Caco-2 (cell line): ENCODE measurements at regions of chr11 and their contacts with region 1.

Region 1: DNA sequence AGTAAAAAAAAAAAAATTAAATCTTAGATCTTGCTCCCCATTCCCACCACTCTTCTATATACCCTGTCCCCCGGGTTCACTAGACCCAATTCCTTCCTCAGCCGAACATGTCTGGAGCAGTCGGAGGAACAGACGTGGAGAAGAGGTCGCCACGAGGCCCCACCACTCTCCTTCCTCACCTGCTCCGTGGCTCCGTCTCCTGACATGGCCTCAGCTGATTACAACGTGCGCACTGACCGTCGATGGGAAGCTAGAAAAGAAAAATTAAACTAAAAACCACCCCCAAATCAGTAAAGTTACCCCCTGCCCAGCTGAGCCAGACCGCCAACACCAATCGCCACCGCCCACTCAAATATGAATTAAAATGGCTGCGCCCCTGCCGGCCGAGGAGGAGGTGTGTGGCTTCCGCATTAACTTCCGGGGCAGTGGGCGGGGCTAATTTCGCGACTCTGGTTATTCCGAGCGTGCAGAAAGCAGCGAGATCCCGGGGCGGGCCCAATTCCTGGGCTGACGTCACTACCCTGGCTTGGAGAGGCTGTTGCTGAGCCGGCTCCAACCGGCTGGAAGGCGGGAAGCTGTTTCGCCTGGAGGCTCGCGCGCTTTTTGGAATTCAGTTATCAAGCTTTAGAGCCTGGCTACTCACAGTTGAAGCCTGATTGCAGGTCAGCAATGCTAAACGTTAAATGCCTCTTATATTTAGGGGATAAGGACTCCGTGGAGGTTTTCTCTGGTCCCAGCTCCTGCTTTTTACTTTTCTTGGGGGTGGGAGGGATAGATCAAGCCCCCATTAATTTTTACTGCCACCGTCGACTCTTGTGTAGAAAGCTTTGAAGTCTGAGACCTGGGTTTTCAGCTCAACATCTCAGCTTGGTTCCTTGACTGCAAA is at the start of gene CSTF3:
- DNase-seq: peak; percentile 100
- H3K4me3 ChIP-seq: peak within 1 kb of the TSS; percentile 79
- H3K4me3 Mint-ChIP-seq: peak within 1 kb of the TSS; percentile 100
- H3K27ac Mint-ChIP-seq: peak within 1 kb of the TSS; percentile 100
- H3K4me1 ChIP-seq: peaks cover 22% of the 10 kb centered on the region
- H3K4me1 Mint-ChIP-seq: peaks cover 11% of the 10 kb centered on the region
- H3K27me3 ChIP-seq: no peaks in the 10 kb centered on the region
- H3K27me3 Mint-ChIP-seq: no peaks in the 10 kb centered on the region
- CTCF ChIP-seq: peak; percentile 46 to 49
- total RNA-seq, gene CSTF3: 43.6 and 45.6 TPM in 2 replicates

Region 2: GRCh38 chr11:33039274-33040032 is 121.9 kb before region 1 on chr11 and contains the start of gene TCP11L1:
- CTCF ChIA-PET with region 1: no interaction called
- POLR2A ChIA-PET with region 1: no interaction called
- intact Hi-C with region 1: no loop called
- DNase-seq: peak; percentile 93 to 94
- H3K4me3 ChIP-seq: peak within 1 kb of the TSS; percentile 80
- H3K4me3 Mint-ChIP-seq: peak within 1 kb of the TSS; percentile 80
- H3K27ac Mint-ChIP-seq: peak within 1 kb of the TSS; percentile 96
- H3K4me1 ChIP-seq: peaks cover 24% of the 10 kb centered on the region
- H3K4me1 Mint-ChIP-seq: peaks cover 19% of the 10 kb centered on the region
- H3K27me3 ChIP-seq: no peaks in the 10 kb centered on the region
- H3K27me3 Mint-ChIP-seq: no peaks in the 10 kb centered on the region
- CTCF ChIP-seq: no peak
- total RNA-seq, gene TCP11L1: 22.8 and 25.0 TPM in 2 replicates

Region 3: DNA sequence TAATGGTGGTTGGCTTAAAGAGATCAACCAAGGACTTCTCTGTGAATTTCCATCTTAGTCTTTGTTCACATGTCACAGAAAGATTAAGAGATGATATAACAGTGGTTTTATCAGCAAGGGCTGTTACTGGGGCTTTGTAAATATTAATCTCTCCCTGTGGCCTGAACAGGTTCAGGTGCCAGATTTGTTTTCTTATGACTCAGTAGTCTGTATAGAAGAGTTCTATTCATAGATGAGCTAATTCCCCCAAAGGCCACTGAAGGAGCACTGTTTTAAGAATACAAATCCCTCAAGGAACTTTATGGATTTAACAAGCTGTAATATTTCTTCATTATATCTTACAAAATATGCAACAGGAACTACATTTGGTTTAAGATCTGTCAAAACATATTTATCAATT is 71.6 kb before region 1 on chr11:
- CTCF ChIA-PET with region 1: no interaction called
- POLR2A ChIA-PET with region 1: interaction called, 3 read pairs
- intact Hi-C with region 1: loop called (anchors 2 kb)
- DNase-seq: no peak
- H3K4me3 ChIP-seq: no peak overlapping the region
- H3K4me3 Mint-ChIP-seq: no peak overlapping the region
- H3K27ac Mint-ChIP-seq: no peak overlapping the region
- H3K4me1 ChIP-seq: peaks cover 20% of the 10 kb centered on the region
- H3K4me1 Mint-ChIP-seq: peaks cover 22% of the 10 kb centered on the region
- H3K27me3 ChIP-seq: no peaks in the 10 kb centered on the region
- H3K27me3 Mint-ChIP-seq: no peaks in the 10 kb centered on the region
- CTCF ChIP-seq: peak; percentile 18 to 24

Region 4: GRCh38 chr11:33195462-33196173 is 34.3 kb after region 1 on chr11:
- CTCF ChIA-PET with region 1: interaction called, 4 read pairs
- POLR2A ChIA-PET with region 1: no interaction called
- intact Hi-C with region 1: loop called (anchors 1 kb)
- DNase-seq: no peak
- H3K4me3 ChIP-seq: no peak overlapping the region
- H3K4me3 Mint-ChIP-seq: no peak overlapping the region
- H3K27ac Mint-ChIP-seq: no peak overlapping the region
- H3K4me1 ChIP-seq: peaks cover 15% of the 10 kb centered on the region
- H3K4me1 Mint-ChIP-seq: peaks cover 19% of the 10 kb centered on the region
- H3K27me3 ChIP-seq: no peaks in the 10 kb centered on the region
- H3K27me3 Mint-ChIP-seq: no peaks in the 10 kb centered on the region
- CTCF ChIP-seq: no peak

Region 5: GRCh38 chr11:33257897-33258630 is 96.7 kb after region 1 on chr11:
- CTCF ChIA-PET with region 1: no interaction called
- POLR2A ChIA-PET with region 1: interaction called, 3 read pairs
- intact Hi-C with region 1: loop called (anchors 2 kb)
- DNase-seq: peak; percentile 86
- H3K4me3 ChIP-seq: peak overlapping the region; percentile 90
- H3K4me3 Mint-ChIP-seq: peak overlapping the region; percentile 96
- H3K27ac Mint-ChIP-seq: peak overlapping the region; percentile 97
- H3K4me1 ChIP-seq: peaks cover 14% of the 10 kb centered on the region
- H3K4me1 Mint-ChIP-seq: peaks cover 20% of the 10 kb centered on the region
- H3K27me3 ChIP-seq: no peaks in the 10 kb centered on the region
- H3K27me3 Mint-ChIP-seq: no peaks in the 10 kb centered on the region
- CTCF ChIP-seq: peak in 1 of 2 experiments; percentile 39

Region 6: GRCh38 chr11:33329705-33330329 is 168.5 kb after region 1 on chr11:
- CTCF ChIA-PET with region 1: interaction called, 7 read pairs
- POLR2A ChIA-PET with region 1: interaction called, 3 read pairs
- intact Hi-C with region 1: loop called (anchors 1 kb)
- DNase-seq: peak; percentile 51 to 71
- H3K4me3 ChIP-seq: no peak overlapping the region
- H3K4me3 Mint-ChIP-seq: no peak overlapping the region
- H3K27ac Mint-ChIP-seq: no peak overlapping the region
- H3K4me1 ChIP-seq: peaks cover under 1% of the 10 kb centered on the region
- H3K4me1 Mint-ChIP-seq: peaks cover 13% of the 10 kb centered on the region
- H3K27me3 ChIP-seq: no peaks in the 10 kb centered on the region
- H3K27me3 Mint-ChIP-seq: no peaks in the 10 kb centered on the region
- CTCF ChIP-seq: peak; percentile 71 to 78